ENCODE measurements at regions of chr4 and their contacts with region 1.

Region 1: GRCh38 chr4:42568610-42569207 is 88.2 kb downstream of the ATP8A1 start:
- DNase-seq: peak in 4 of 5 donors; percentile 47 to 79 (median 64)
- H3K4me3 ChIP-seq: no peak overlapping the region
- H3K27ac ChIP-seq: no peak overlapping the region
- H3K4me1 ChIP-seq: peaks cover 10% of the 10 kb centered on the region
- H3K27me3 ChIP-seq: no peaks in the 10 kb centered on the region
- CTCF ChIP-seq: peak; percentile 58 to 72 (median 63)
- EP300 ChIP-seq: no peak
- POLR2A ChIP-seq: no peak

Region 2: GRCh38 chr4:42865572-42866189 is 297.0 kb after region 1 on chr4:
- intact Hi-C with region 1: loop called in 3 of 4 experiments (anchors 5 to 10 kb)
- DNase-seq: peak in 4 of 5 donors; percentile 12 to 47 (median 17)
- H3K4me3 ChIP-seq: no peak overlapping the region
- H3K27ac ChIP-seq: no peak overlapping the region
- H3K4me1 ChIP-seq: no peaks in the 10 kb centered on the region
- H3K27me3 ChIP-seq: no peaks in the 10 kb centered on the region
- CTCF ChIP-seq: peak in 2 of 3 donors; percentile 41 to 48
- EP300 ChIP-seq: no peak
- POLR2A ChIP-seq: no peak

Measured in ovary (tissue), 10 donors.